ENCODE measurements at regions of chr16 and their contacts with region 1.

Region 1: DNA sequence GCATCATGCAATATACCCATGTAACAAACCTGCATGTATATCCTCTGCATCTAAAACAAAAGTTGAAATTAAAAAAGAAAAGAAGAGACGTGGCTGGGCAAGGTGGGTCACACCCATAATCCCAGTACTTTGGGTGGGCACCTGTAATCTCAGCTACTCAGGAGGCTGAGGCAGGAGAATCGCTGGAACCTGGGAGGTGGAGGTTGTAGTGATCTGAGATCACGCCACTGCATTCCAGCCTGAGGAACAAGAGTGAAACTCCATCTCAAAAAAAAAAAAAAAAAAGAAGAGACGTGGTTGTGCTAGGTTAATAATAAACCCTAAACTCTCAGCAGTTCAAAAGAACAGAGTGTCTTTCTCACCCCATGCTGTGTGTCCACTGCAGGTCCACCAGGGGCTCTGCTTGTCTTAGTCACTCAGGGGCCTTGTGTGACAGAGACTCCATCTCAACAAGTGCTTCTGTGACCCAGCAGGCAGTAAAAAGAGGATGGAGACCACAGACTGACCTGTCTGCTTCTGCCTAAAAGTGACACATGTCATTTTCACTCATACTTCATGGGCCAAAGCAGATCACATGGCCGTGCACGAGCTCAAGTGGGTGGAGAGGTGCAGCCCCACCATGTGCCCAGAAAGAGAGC is 22.3 kb upstream of the N4BP1 start:
- H3K4me3 Mint-ChIP-seq: no peak overlapping the region
- H3K27ac Mint-ChIP-seq: no peak overlapping the region
- H3K4me1 Mint-ChIP-seq: peaks cover 25% of the 10 kb centered on the region
- H3K27me3 Mint-ChIP-seq: peaks cover 11% of the 10 kb centered on the region

Region 2: GRCh38 chr16:48188449-48189102 is 443.7 kb before region 1 on chr16:
- intact Hi-C with region 1: loop called (anchors 10 kb)
- H3K4me3 Mint-ChIP-seq: no peak overlapping the region
- H3K27ac Mint-ChIP-seq: peak overlapping the region; percentile 87
- H3K4me1 Mint-ChIP-seq: peaks cover 43% of the 10 kb centered on the region
- H3K27me3 Mint-ChIP-seq: peaks cover 1% of the 10 kb centered on the region

Region 3: GRCh38 chr16:48231727-48232492 is 400.3 kb before region 1 on chr16:
- intact Hi-C with region 1: loop called (anchors 2 kb)
- H3K4me3 Mint-ChIP-seq: no peak overlapping the region
- H3K27ac Mint-ChIP-seq: peak overlapping the region; percentile 74
- H3K4me1 Mint-ChIP-seq: peaks cover 8% of the 10 kb centered on the region
- H3K27me3 Mint-ChIP-seq: peaks cover 11% of the 10 kb centered on the region

Region 4: GRCh38 chr16:48487287-48487686 is 145.0 kb before region 1 on chr16:
- intact Hi-C with region 1: no loop called
- H3K4me3 Mint-ChIP-seq: no peak overlapping the region
- H3K27ac Mint-ChIP-seq: no peak overlapping the region
- H3K4me1 Mint-ChIP-seq: peaks cover 16% of the 10 kb centered on the region
- H3K27me3 Mint-ChIP-seq: peaks cover 23% of the 10 kb centered on the region

Region 5: GRCh38 chr16:48676836-48677235 is 44.6 kb after region 1 on chr16:
- intact Hi-C with region 1: no loop called
- H3K4me3 Mint-ChIP-seq: no peak overlapping the region
- H3K27ac Mint-ChIP-seq: no peak overlapping the region
- H3K4me1 Mint-ChIP-seq: no peaks in the 10 kb centered on the region
- H3K27me3 Mint-ChIP-seq: no peaks in the 10 kb centered on the region